AG04450 (cell line): ENCODE measurements at regions of chr1 and their contacts with region 1.

Region 1: DNA sequence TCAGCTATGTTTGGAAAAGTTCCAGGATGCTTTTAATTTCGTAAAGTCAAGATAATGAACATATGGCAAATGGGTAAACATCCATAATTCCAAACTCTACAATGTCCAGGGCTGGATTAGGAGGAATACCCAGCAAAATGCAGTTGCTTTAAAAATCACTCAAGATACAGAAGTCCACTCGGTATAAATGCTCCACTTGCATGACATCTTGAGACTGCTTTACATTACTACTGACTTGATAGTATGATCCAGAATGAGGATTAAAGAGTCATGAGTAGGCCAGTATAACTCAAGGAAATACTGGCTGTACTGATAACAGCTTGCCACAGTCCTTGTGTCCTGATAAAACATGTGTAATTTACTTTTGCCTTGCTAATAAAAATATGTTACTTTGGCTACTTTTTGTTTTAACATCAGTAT is 58.3 kb upstream of the ANGPTL3 start:
- DNase-seq: no peak
- H3K4me3 ChIP-seq: no peak overlapping the region
- H3K27ac ChIP-seq: no peak overlapping the region
- H3K27me3 ChIP-seq: no peaks in the 10 kb centered on the region
- CTCF ChIP-seq: no peak

Region 2: GRCh38 chr1:62508187-62508758 is 30.8 kb before region 1 on chr1:
- CTCF ChIA-PET with region 1: interaction called, 13 read pairs
- POLR2A ChIA-PET with region 1: no interaction called
- DNase-seq: peak; percentile 11
- H3K4me3 ChIP-seq: no peak overlapping the region
- H3K27ac ChIP-seq: no peak overlapping the region
- H3K27me3 ChIP-seq: no peaks in the 10 kb centered on the region
- CTCF ChIP-seq: peak; percentile 67

Region 3: DNA sequence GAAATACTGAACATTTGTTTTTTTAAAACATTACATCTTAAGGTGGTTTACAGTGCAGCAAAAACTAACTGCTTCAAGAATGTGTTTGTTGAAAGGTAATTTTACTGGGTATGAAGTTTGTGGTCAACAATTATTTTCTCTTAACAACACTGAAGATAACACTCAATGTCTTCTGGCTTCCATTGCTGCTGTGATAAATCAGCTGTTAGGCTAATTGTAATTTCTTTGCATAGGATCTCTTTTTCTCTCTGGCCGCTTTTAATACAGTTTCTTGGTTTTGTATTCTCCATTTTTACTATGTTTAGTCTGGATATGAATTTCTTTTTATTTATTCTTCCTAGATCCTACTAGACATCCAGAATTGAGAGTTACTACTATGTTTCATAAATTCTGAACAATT is 104.2 kb after region 1 on chr1:
- CTCF ChIA-PET with region 1: no interaction called
- POLR2A ChIA-PET with region 1: no interaction called
- DNase-seq: no peak
- H3K4me3 ChIP-seq: no peak overlapping the region
- H3K27ac ChIP-seq: no peak overlapping the region
- H3K27me3 ChIP-seq: no peaks in the 10 kb centered on the region
- CTCF ChIP-seq: no peak